Vagina (tissue), 2 donors: ENCODE measurements at regions of chr2 and their contacts with region 1.

Region 1: GRCh38 chr2:217804786-217805667 is 197.8 kb downstream of the TNS1 start:
- DNase-seq: no peak
- H3K4me3 ChIP-seq: no peak overlapping the region
- H3K27ac ChIP-seq: peak overlapping the region; percentile 39
- H3K4me1 ChIP-seq: peaks cover 42% of the 10 kb centered on the region
- H3K27me3 ChIP-seq: no peaks in the 10 kb centered on the region
- CTCF ChIP-seq: no peak
- POLR2A ChIP-seq: no peak

Region 2: GRCh38 chr2:217880287-217880889 is 75.4 kb after region 1 on chr2:
- intact Hi-C with region 1: loop called (anchors 5 kb)
- DNase-seq: no peak
- H3K4me3 ChIP-seq: no peak overlapping the region
- H3K27ac ChIP-seq: peak overlapping the region; percentile 75
- H3K4me1 ChIP-seq: peaks cover 51% of the 10 kb centered on the region
- H3K27me3 ChIP-seq: no peaks in the 10 kb centered on the region
- CTCF ChIP-seq: no peak
- POLR2A ChIP-seq: no peak

Region 3: DNA sequence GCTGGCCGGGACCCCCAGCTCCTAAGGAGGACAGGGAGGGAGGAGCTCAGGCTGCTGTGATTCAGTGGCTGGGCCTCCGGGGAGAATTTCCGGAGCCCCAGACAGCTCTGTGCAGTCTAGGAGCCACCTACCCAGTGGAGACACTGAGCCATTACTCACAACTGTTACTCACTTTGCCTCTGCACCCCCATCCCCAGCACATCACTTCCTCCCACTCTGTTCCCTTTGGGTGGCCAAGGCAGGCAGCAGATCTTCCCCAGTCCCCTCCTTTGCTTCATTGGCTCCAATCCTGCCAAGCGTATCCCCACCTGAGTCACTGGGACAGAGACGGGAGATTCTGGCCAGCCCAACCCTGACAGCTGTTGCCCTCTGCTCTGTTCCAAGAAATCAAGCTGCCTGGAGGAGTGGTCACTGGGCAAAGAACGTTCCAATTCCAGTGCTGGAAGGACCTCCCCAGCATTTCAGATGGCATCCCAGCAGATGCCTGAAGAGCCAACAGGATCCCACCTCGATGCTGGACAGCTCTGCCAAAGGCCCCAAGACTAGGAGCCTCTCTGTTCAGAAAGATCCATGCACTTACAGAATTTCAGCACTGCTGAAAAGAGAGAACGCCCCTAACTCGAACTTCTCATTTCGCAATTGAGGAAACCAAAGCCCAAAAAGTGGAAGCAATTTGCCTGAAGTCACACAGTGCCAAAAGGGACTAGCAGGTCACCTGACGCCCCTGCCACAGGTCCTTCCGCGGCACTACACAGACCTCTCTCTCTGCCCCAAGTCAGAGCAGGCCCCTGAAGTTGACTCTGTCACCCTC is 129.5 kb after region 1 on chr2:
- intact Hi-C with region 1: no loop called
- DNase-seq: no peak
- H3K4me3 ChIP-seq: peak overlapping the region; percentile 22 to 37
- H3K27ac ChIP-seq: peak overlapping the region; percentile 87
- H3K4me1 ChIP-seq: peaks cover 100% of the 10 kb centered on the region
- H3K27me3 ChIP-seq: no peaks in the 10 kb centered on the region
- CTCF ChIP-seq: peak in 1 of 3 experiments; percentile 14
- POLR2A ChIP-seq: no peak